ENCODE measurements at regions of chr7 and their contacts with region 1.

Region 1: DNA sequence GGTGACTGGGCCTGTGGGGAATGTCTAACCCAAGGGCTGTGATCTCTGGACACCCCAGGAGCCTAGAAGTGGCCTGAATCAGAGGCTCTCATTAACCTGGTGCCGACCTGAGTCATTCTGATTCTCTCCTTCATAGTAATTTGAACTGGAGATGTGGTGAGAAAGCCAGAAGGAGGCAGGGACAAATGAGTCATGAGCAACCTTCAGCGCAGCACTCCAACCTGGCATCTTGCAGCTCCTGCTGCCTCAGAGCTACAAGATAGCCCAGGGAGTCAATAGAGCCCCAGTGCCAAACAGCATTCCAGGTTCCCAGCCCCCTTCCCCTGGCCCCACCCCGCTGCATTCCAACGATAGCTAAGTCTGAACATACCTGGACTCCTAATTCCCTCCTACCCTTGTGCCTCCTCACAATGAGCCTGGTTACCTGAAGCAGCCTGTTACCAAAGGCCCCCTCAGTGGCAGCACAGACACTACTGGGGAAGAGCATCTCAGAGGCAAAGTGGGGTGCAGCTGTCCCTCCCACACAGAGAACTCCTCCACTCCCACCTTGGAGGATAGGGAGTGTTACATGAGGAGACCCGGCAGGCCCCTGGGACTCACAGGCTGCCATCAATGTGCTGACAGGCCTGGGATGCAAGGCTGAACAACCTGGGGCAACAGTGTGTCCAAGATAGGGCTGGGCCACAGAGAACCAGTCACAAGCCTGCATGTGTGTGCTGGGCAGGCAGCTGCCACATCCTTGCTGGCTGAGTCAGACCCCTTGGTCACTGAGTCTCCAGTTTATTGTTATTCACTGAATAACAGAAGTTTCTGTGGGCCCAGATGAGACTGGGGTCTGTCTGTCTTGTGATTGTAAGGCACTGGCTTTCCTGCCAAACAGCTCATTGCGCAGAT is 76.8 kb upstream of the LEP start:
- DNase-seq: peak; percentile 96 to 98
- H3K4me3 ChIP-seq: no peak overlapping the region; the same call in 1 of the 2 replicates
- H3K27ac ChIP-seq: peak overlapping the region; percentile 100
- H3K4me1 ChIP-seq: peaks cover 36% of the 10 kb centered on the region
- H3K27me3 ChIP-seq: peaks cover 26% of the 10 kb centered on the region; the same call in 1 of the 2 replicates
- CTCF ChIP-seq: no peak

Region 2: GRCh38 chr7:127745445-127745844 is 418.9 kb before region 1 on chr7:
- CTCF ChIA-PET with region 1: no interaction called
- POLR2A ChIA-PET with region 1: no interaction called
- intact Hi-C with region 1: no loop called
- DNase-seq: no peak
- H3K4me3 ChIP-seq: no peak overlapping the region
- H3K27ac ChIP-seq: no peak overlapping the region
- H3K4me1 ChIP-seq: no peaks in the 10 kb centered on the region
- H3K27me3 ChIP-seq: no peaks in the 10 kb centered on the region
- CTCF ChIP-seq: no peak

Region 3: GRCh38 chr7:128020159-128020558 is 144.1 kb before region 1 on chr7:
- CTCF ChIA-PET with region 1: no interaction called
- POLR2A ChIA-PET with region 1: no interaction called
- intact Hi-C with region 1: loop called (anchors 5 kb)
- DNase-seq: no peak
- H3K4me3 ChIP-seq: no peak overlapping the region
- H3K27ac ChIP-seq: peak overlapping the region; percentile 99
- H3K4me1 ChIP-seq: peaks cover 47% of the 10 kb centered on the region
- H3K27me3 ChIP-seq: no peaks in the 10 kb centered on the region
- CTCF ChIP-seq: no peak; the same call in 1 of the 2 replicates

Region 4: GRCh38 chr7:128176696-128177095 is 12.4 kb after region 1 on chr7:
- CTCF ChIA-PET with region 1: no interaction called
- POLR2A ChIA-PET with region 1: no interaction called
- intact Hi-C with region 1: loop called (anchors 1 kb)
- DNase-seq: peak; percentile 80 to 91
- H3K4me3 ChIP-seq: no peak overlapping the region
- H3K27ac ChIP-seq: no peak overlapping the region
- H3K4me1 ChIP-seq: peaks cover 7% of the 10 kb centered on the region
- H3K27me3 ChIP-seq: no peaks in the 10 kb centered on the region
- CTCF ChIP-seq: no peak

Region 5: DNA sequence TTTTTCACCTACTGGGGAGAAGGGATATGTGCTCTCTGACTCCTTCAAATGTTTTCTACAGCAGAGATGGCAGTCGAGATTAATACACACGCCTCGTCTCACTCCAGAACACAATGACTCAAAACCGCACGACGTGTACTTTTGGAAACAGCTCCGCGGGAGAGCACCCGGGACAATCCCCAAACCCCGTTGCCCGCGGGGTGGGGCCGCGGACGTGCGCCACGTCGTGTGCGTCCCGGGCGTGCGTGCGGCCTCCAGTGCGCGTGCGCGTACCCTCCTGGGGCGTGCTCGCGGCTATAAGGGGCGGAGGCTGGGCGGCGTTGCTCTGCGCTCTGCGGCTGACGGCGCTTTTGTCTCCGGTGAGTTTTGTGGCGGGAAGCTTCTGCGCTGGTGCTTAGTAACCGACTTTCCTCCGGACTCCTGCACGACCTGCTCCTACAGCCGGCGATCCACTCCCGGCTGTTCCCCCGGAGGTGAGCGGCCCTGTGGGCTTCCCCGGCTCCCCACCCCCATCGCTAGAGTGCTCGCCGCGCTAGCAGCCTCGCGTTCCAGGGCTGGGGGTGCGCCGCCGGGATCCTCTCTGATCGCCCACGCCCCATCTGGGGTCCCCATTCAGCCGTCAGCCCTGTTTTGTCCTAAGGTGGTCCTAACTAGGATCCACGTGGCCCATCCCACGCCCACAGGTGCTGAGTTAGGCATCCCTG is 291.4 kb after region 1 on chr7 and contains the start of gene HILPDA:
- CTCF ChIA-PET with region 1: no interaction called
- POLR2A ChIA-PET with region 1: interaction called, 10 read pairs
- intact Hi-C with region 1: no loop called
- DNase-seq: peak; percentile 82 to 94
- H3K4me3 ChIP-seq: peak within 1 kb of the TSS; percentile 84
- H3K27ac ChIP-seq: peak within 1 kb of the TSS; percentile 56
- H3K4me1 ChIP-seq: peaks cover 29% of the 10 kb centered on the region
- H3K27me3 ChIP-seq: no peaks in the 10 kb centered on the region
- CTCF ChIP-seq: no peak; the same call in 1 of the 2 replicates
- total RNA-seq, gene HILPDA: 22.8 and 30.3 TPM in 2 replicates